ENCODE measurements at regions of chr20 and their contacts with region 1.

Region 1: DNA sequence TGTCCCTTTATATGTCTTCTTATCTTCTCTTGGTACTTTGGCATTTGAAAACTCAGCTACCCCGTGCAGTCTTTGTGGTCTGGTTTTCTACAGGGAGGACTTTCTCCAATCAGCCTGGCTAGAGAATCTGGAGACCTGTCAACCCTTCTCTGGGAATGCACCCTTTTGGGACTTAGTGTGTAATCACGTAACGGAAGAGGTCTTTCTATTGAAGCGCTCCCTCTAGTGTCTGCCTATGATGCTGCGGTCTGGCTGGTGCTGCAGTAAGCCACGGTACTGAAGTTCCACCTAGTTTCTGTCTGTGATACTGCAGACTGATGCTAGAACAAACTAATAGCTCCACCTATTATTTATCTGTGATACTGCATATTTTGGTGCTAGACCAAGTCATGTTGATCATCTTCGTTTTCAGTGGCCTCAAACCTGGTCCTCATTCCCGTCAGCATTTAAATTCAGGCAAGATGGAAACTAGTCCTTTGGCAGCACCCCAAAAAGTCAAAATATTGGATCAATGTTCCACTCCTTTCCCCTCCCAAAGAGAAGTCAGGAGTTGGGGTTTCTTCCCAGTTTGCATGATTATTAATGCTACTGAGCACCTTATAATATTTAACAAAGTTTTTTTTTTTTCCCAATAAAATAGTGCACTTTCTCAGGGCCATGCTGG is 12.5 kb upstream of the SIRPB2 start:
- DNase-seq: peak; percentile 79
- CTCF ChIP-seq: peak; percentile 97

Region 2: DNA sequence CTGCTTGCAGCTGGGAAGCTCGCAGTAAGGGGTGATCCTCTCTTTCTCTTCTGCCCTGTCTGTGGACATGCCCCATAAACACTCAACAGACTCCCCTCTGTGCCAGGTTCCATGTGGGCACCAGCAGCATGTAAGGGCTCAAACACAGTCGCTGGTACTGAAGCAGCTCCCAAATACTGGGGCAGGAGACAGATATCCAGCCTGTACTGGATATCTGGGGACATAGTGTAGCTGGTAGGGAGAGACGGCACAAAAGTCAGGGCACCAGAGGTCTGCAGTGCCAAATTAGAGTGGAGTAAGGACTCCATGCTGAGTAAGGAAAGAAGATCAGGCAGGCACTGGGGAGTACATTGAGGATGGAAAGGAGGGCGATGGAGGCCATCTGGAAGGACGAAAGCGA is 453.3 kb before region 1 on chr20:
- CTCF ChIA-PET with region 1: no interaction called
- POLR2A ChIA-PET with region 1: no interaction called
- DNase-seq: no peak
- CTCF ChIP-seq: no peak

Region 3: DNA sequence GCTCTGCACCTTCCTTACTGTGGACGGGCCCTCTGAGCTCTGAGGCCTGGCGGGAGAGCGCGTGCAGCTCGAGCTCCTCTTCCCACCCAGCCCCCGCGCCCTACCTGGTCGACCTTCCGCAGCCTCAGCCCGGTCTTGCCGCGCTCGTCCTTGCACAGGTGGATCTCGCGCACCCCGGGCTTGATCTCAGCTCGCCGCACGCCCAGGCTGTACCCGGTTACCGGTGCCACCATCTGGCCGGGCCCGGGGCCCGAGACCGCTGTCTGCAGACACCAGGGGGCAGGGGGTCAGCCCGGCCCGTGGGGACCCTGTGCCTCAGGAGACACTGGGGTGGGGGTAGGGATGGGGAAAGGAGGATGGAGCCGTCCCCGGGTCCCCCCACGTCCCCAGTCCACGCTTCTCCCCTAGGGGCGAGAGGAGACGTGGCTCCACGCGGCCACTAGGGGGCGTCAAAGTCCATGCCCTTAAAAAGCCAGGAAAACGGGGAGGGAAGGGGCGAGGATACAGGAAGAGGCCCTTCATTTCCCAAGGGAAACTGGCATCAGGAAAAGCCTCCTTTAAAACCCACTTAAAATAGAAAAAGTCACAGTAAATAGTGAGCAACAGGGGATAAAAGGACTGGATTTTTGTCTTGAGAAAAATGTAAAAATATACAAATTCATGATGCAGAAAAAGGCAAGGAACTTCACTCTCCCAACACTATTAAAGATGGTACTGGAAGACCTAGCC is 190.3 kb before region 1 on chr20:
- CTCF ChIA-PET with region 1: interaction called, 15 read pairs
- POLR2A ChIA-PET with region 1: no interaction called
- DNase-seq: peak; percentile 81
- CTCF ChIP-seq: peak; percentile 88

Region 4: DNA sequence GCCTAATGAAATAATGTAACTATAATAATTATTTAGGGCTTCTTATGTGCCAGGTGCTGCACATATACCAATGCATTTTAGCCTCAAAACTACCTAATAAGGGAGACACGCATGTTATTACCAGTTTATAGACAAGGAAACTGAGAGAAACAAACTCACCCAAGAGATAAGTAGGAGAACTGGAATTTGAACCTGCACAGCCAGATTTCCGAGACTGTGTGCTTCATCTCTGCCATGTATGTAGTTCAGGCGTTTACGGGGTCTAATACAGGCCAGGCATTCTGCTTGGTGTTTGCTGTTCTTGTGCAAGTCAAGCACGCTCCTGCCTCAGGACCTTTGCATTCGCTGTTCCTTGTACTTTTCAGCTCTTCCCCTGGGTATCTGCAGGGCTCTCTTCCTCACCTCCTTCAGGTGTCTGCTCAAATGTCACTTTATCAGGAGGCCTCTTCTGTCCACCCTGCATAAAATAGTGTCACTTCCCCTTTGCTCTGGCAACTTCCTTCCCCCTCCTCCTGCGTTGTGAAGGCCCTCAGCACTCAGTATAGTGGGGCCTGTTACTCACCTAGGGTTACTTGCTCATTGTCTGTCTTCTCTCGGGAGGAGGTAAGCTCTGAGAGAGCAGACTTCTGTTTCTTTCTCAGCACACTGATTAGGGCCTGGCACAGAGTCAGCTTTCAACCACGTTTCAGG is 31.0 kb before region 1 on chr20:
- CTCF ChIA-PET with region 1: interaction called, 23 read pairs
- POLR2A ChIA-PET with region 1: no interaction called
- DNase-seq: no peak
- CTCF ChIP-seq: no peak

Region 5: GRCh38 chr20:1491281-1491840 is 12.3 kb before region 1 on chr20 and contains the start of gene SIRPB2:
- CTCF ChIA-PET with region 1: interaction called, 18 read pairs
- POLR2A ChIA-PET with region 1: no interaction called
- DNase-seq: no peak
- CTCF ChIP-seq: no peak

Region 6: GRCh38 chr20:1524004-1524403 is 20.3 kb after region 1 on chr20:
- CTCF ChIA-PET with region 1: interaction called, 10 read pairs
- POLR2A ChIA-PET with region 1: no interaction called
- DNase-seq: no peak
- CTCF ChIP-seq: no peak

Region 7: GRCh38 chr20:3420211-3420707 is 1916.6 kb after region 1 on chr20:
- CTCF ChIA-PET with region 1: no interaction called
- POLR2A ChIA-PET with region 1: no interaction called
- DNase-seq: peak; percentile 77
- CTCF ChIP-seq: no peak